ENCODE measurements at regions of chr10 and their contacts with region 1.

Region 1: DNA sequence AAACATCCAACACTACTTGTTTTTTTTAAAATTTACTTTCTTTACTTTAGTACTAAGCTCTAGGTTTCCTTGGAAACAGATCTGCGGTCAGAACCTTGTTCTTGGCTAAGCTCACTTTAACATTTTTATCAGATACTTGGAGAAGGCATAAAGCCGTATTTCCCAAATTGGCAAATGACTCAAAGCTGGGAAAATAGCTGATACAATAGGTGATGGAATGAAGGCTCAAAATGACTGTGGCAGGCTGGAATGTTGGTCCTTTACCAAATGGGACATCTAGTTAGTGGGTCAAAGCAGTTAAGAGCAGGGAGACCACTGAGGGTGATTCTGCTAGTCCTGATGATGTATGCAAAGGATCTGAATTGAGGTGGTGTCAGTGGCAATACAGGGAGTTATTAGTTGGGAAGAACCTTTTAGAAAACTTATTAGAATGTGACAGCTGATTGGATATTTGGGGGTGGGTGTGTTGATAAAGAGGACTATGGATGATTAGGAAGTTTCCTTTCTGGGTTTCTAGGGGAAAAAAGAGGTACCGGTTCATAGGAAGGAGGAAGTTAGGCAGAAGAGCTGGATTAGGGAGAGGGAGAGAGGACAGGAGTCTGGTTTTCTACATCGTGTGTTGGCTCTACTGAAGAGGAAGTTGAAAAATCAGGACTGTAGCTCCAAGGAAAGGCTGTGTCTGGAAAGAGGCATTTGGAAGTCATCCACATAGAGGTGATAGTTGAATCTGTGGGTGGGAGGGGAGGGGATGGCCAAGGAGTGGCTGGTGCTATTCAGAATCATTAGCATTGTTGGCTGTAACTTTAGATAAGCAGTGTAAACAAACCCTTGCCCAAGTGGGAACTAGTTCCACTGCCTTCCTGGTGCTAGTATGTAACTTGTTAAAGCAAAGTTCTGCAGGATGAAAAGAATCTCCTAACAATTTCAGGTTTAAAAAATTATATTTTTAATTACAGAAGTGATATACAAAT is 13.1 kb downstream of the PLCE1 start:
- DNase-seq: peak; percentile 43 to 93
- H3K4me3 ChIP-seq: peak overlapping the region; percentile 44; the same call in 1 of the 2 replicates
- H3K27ac ChIP-seq: peak overlapping the region; percentile 94
- H3K4me1 ChIP-seq: peaks cover 59% of the 10 kb centered on the region
- H3K27me3 ChIP-seq: no peaks in the 10 kb centered on the region
- CTCF ChIP-seq: no peak

Region 2: DNA sequence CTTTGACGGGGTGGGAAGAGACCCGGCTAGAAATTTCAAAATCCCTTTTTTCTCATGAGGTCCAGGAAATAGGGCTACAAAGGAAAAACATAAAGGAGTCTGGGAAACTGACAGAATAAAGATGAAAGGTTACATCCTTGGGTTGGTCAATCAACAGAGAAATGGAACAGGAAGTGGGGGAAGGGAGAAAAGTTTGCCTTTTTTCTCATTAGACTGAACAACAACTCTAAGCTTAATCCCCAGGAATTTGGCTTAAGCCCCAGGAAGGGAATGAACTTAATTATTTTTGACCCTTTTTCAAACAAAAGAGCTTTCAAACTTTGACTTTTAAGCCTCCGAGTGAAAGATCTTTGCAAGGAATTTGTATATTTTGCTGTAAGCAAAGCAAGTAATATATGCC is 216.4 kb before region 1 on chr10:
- CTCF ChIA-PET with region 1: no interaction called
- POLR2A ChIA-PET with region 1: no interaction called
- intact Hi-C with region 1: no loop called
- DNase-seq: no peak
- H3K4me3 ChIP-seq: no peak overlapping the region
- H3K27ac ChIP-seq: no peak overlapping the region
- H3K4me1 ChIP-seq: no peaks in the 10 kb centered on the region
- H3K27me3 ChIP-seq: no peaks in the 10 kb centered on the region
- CTCF ChIP-seq: no peak

Region 3: DNA sequence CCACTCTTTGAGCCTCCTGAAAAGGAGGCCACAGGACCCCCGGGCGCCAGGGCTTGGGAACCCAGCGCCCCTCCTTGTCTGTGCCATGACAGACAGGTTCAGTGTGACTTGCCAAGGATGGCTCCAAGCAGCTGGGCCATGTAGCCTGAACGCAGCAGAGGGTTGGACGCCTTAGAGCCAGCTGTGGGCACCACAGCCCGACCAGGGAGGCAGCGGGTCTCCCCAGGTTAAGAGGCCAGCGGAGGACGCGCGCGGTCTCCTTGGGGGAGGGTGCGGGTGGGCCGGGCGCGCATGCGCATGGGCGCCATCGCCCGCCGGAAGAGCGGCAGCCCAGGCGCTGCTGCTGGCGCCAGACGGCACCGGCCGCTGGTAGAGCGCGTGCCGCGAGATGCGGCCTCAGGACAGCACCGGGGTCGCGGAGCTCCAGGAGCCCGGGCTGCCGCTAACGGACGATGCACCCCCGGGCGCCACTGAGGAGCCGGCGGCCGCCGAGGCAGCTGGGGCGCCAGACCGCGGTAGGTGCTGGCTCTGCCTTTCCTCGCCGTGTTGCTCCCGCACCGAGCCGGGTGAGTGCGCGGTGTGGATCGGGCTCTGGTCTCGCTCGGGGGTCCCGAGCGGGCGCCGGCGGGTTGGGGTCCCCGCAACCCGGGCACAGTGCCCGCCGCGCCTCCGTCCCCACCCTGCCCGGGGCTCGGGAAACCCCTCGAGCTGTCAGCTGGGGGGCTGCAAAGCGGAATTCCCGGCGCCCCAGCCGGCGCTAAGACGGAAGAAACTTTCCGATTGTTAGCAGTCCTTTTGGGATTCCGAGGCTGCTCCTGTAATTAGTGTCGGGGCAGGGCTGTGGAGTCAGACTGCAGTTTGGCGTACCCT is 113.0 kb before region 1 on chr10 and contains the start of gene SLC35G1:
- CTCF ChIA-PET with region 1: no interaction called
- POLR2A ChIA-PET with region 1: no interaction called
- intact Hi-C with region 1: no loop called
- DNase-seq: peak; percentile 43 to 45
- H3K4me3 ChIP-seq: peak within 1 kb of the TSS; percentile 78
- H3K27ac ChIP-seq: no peak within 1 kb of the TSS
- H3K4me1 ChIP-seq: peaks cover 5% of the 10 kb centered on the region; the same call in 1 of the 2 replicates
- H3K27me3 ChIP-seq: no peaks in the 10 kb centered on the region
- CTCF ChIP-seq: no peak
- total RNA-seq, gene SLC35G1: 3.7 and 4.1 TPM in 2 replicates

Region 4: GRCh38 chr10:93993782-93994437 is 13.0 kb before region 1 on chr10 and contains the start of gene PLCE1:
- CTCF ChIA-PET with region 1: no interaction called
- POLR2A ChIA-PET with region 1: interaction called, 14 read pairs
- intact Hi-C with region 1: loop called (anchors 1 kb)
- DNase-seq: peak; percentile 42 to 65
- H3K4me3 ChIP-seq: peak within 1 kb of the TSS; percentile 79
- H3K27ac ChIP-seq: no peak within 1 kb of the TSS; the same call in 1 of the 2 replicates
- H3K4me1 ChIP-seq: peaks cover 56% of the 10 kb centered on the region
- H3K27me3 ChIP-seq: no peaks in the 10 kb centered on the region
- CTCF ChIP-seq: no peak
- total RNA-seq, gene PLCE1: 14.8 and 15.2 TPM in 2 replicates

Region 5: DNA sequence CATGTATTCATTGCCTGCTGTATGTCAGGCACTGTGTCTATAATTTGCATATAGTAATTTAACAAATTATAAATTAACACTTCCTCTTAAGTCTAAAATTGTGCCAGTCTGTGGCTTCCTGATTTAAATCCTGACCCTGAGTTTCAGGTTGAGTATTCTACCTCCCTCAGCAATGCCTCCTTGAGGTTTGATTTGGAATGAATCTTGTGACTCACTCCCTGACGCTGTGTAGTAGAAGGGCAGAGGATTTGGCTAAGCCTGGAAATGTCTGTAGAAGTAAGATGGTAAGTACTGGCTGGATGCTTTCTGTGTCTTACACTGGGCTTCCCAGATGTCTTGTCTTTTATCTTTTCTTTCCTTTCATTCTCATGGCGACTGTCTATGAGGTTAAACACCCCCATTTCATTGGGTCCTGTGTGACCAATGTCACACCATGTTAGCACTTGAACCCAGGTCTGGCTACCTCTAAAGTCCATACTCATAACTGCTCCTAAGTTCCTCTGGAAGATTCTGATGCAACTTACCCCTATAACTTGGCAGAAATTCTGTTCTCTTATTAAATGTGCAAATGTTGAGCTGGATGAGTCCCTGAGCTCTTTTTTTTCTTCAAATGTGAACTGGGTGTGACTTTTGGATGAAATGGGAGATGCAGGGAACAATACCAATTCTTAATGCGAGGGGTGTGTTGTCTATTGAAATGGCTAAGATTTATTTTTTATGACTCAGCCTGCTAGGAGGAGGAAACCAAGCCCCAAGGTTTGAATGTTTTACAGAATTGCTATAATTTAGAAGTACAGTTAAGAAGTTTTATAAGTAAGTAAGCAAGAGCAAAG is 35.3 kb after region 1 on chr10:
- CTCF ChIA-PET with region 1: no interaction called
- POLR2A ChIA-PET with region 1: interaction called, 12 read pairs
- intact Hi-C with region 1: loop called (anchors 1 kb)
- DNase-seq: peak; percentile 31 to 61
- H3K4me3 ChIP-seq: no peak overlapping the region
- H3K27ac ChIP-seq: peak overlapping the region; percentile 63
- H3K4me1 ChIP-seq: peaks cover 34% of the 10 kb centered on the region
- H3K27me3 ChIP-seq: no peaks in the 10 kb centered on the region
- CTCF ChIP-seq: no peak

Region 6: GRCh38 chr10:94123258-94123995 is 116.6 kb after region 1 on chr10:
- CTCF ChIA-PET with region 1: no interaction called
- POLR2A ChIA-PET with region 1: no interaction called
- intact Hi-C with region 1: loop called (anchors 2 kb)
- DNase-seq: peak; percentile 30 to 87
- H3K4me3 ChIP-seq: no peak overlapping the region
- H3K27ac ChIP-seq: peak overlapping the region; percentile 31; the same call in 1 of the 2 replicates
- H3K4me1 ChIP-seq: peaks cover 26% of the 10 kb centered on the region
- H3K27me3 ChIP-seq: no peaks in the 10 kb centered on the region
- CTCF ChIP-seq: no peak